Activated CD4-positive, alpha-beta T cell treated with anti-CD3 and anti-CD28 coated beads for 36 hours (primary cell): ENCODE measurements at regions of chr19 and their contacts with region 1.

Region 1: GRCh38 chr19:45022010-45022409 is 16.8 kb upstream of the CLASRP start:
- DNase-seq: no peak
- ATAC-seq: no peak
- H3K4me3 Mint-ChIP-seq: no peak overlapping the region
- H3K27ac Mint-ChIP-seq: no peak overlapping the region
- H3K4me1 Mint-ChIP-seq: no peaks in the 10 kb centered on the region
- H3K27me3 Mint-ChIP-seq: no peaks in the 10 kb centered on the region

Region 2: DNA sequence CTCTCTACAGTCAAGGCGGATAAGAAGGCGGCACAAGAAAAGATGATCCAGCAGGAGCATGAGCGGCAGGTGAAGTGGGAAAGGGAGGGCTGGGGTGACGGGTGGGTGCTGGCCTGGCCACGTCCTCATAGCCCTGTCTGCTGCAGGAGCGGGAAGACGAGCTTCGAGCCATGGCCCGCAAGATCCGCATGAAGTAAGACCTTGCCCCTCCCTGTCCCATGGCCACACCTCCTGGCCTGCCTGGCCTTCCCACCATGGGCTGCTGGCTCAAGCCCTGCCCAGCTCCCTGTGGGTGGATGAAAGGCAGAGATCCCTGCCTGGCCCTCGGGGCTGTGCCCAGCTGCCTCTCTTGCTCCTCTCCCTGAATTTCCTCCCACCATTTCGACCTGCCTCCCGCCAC is 47.0 kb after region 1 on chr19:
- CTCF ChIA-PET with region 1: no interaction called
- POLR2A ChIA-PET with region 1: interaction called, 10 read pairs
- intact Hi-C with region 1: no loop called
- DNase-seq: no peak
- ATAC-seq: no peak
- H3K4me3 Mint-ChIP-seq: no peak overlapping the region
- H3K27ac Mint-ChIP-seq: no peak overlapping the region
- H3K4me1 Mint-ChIP-seq: no peaks in the 10 kb centered on the region
- H3K27me3 Mint-ChIP-seq: no peaks in the 10 kb centered on the region